ENCODE measurements at regions of chr14 and their contacts with region 1.

Region 1: GRCh38 chr14:34051966-34052657 is 101.2 kb upstream of the EGLN3 start:
- DNase-seq: peak in 1 of 2 experiments; percentile 70
- H3K4me3 ChIP-seq: no peak overlapping the region
- H3K27ac ChIP-seq: peak overlapping the region; percentile 27; the same call in 1 of the 2 replicates
- H3K4me1 ChIP-seq: peaks cover 24% of the 10 kb centered on the region
- H3K27me3 ChIP-seq: no peaks in the 10 kb centered on the region
- CTCF ChIP-seq: no peak

Region 2: DNA sequence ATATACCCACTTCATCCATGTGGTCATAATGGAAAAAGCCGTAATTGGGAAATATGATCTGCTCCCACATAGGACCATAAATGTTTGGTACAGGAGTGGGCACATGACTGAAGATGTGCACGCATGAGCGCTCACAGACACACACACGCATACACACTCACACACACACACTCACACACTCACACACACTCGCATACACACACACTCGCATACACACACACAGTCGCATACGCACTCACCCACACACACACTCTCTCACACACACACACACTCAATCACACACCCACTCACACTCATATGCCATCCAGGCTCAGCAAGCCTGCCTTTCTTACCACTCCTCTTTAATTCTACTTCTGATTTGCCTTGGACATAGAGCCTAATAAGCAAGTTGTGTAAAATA is 55.6 kb before region 1 on chr14:
- CTCF ChIA-PET with region 1: no interaction called
- POLR2A ChIA-PET with region 1: no interaction called
- intact Hi-C with region 1: loop called (anchors 5 kb)
- DNase-seq: no peak
- H3K4me3 ChIP-seq: no peak overlapping the region
- H3K27ac ChIP-seq: no peak overlapping the region
- H3K4me1 ChIP-seq: peaks cover 18% of the 10 kb centered on the region
- H3K27me3 ChIP-seq: no peaks in the 10 kb centered on the region
- CTCF ChIP-seq: no peak

Region 3: GRCh38 chr14:34087556-34087955 is 35.4 kb after region 1 on chr14:
- CTCF ChIA-PET with region 1: no interaction called
- POLR2A ChIA-PET with region 1: no interaction called
- intact Hi-C with region 1: no loop called
- DNase-seq: no peak
- H3K4me3 ChIP-seq: no peak overlapping the region
- H3K27ac ChIP-seq: no peak overlapping the region
- H3K4me1 ChIP-seq: peaks cover 31% of the 10 kb centered on the region
- H3K27me3 ChIP-seq: no peaks in the 10 kb centered on the region
- CTCF ChIP-seq: no peak

Region 4: DNA sequence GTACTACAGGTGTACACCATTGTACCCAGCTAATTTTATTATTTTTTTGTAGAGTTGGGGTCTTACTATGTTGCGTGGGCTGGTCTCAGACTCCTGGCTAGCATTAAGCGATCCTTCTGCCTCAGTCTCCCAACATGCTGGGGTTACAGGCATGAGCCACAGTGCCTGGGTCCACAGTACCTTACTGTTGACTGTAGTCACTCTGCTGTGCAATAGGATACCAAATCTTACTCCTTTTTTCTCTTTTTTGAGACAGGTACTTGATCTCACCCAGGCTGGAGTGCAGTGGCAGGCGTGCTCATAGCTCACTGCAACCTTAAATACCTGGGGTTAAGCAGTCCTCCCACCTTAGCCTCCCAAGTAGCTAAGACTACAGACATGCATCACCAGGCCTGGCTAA is 1265.7 kb after region 1 on chr14:
- CTCF ChIA-PET with region 1: no interaction called
- POLR2A ChIA-PET with region 1: no interaction called
- intact Hi-C with region 1: no loop called
- DNase-seq: no peak
- H3K4me3 ChIP-seq: no peak overlapping the region
- H3K27ac ChIP-seq: no peak overlapping the region
- H3K4me1 ChIP-seq: no peaks in the 10 kb centered on the region
- H3K27me3 ChIP-seq: no peaks in the 10 kb centered on the region
- CTCF ChIP-seq: no peak